ENCODE measurements at regions of chr6 and their contacts with region 1.

Region 1: DNA sequence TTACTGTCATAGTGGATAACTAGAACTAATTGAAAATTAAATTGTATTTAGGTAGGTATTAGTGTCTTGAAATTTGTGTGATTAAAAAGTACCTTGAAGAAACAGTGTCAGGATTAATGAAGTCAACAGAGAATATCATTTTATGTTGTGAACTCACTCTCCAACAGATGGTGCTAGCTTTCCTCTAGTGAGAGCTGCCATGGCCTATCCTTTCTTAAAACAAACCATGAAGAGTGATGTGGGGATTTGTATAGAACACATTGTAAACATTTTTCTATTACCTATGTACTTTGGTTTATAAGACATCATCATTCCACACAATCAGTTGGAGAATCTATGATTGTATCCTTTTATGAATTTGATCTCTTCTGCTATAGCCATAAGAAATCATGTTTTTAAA is 4.8 kb upstream of the SRSF12 start:
- DNase-seq: peak; percentile 21
- ATAC-seq: peak; percentile 90
- H3K4me3 ChIP-seq: no peak overlapping the region
- H3K27ac ChIP-seq: no peak overlapping the region
- H3K4me1 ChIP-seq: peaks cover 0 to 8% of the 10 kb centered on the region in 2 experiments; a peak in 2 of 4 replicates
- H3K27me3 ChIP-seq: no peaks in the 10 kb centered on the region
- CTCF ChIP-seq: peak; percentile 38 to 61 (median 55); a peak in 4 of 6 replicates
- POLR2A ChIP-seq: no peak
- RAD21 ChIP-seq: peak; percentile 82

Region 2: GRCh38 chr6:87848574-87848973 is 1274.1 kb before region 1 on chr6:
- CTCF ChIA-PET with region 1: no interaction called
- POLR2A ChIA-PET with region 1: no interaction called
- RAD21 ChIA-PET with region 1: no interaction called
- intact Hi-C with region 1: no loop called
- DNase-seq: no peak
- ATAC-seq: no peak
- H3K4me3 ChIP-seq: no peak overlapping the region
- H3K27ac ChIP-seq: no peak overlapping the region
- H3K4me1 ChIP-seq: no peaks in the 10 kb centered on the region
- H3K27me3 ChIP-seq: no peaks in the 10 kb centered on the region
- CTCF ChIP-seq: no peak
- POLR2A ChIP-seq: no peak
- RAD21 ChIP-seq: no peak

Region 3: GRCh38 chr6:89242574-89243330 is 120.1 kb after region 1 on chr6:
- CTCF ChIA-PET with region 1: interaction called, 19 read pairs
- POLR2A ChIA-PET with region 1: no interaction called
- RAD21 ChIA-PET with region 1: interaction called in 1 of 2 experiments, 4 read pairs
- intact Hi-C with region 1: loop called (anchors 1 kb)
- DNase-seq: peak; percentile 59
- ATAC-seq: peak; percentile 86
- H3K4me3 ChIP-seq: no peak overlapping the region
- H3K27ac ChIP-seq: no peak overlapping the region
- H3K4me1 ChIP-seq: no peaks in the 10 kb centered on the region
- H3K27me3 ChIP-seq: no peaks in the 10 kb centered on the region
- CTCF ChIP-seq: peak; percentile 46 to 74 (median 52); a peak in 5 of 6 replicates
- POLR2A ChIP-seq: no peak
- RAD21 ChIP-seq: peak; percentile 86

Region 4: DNA sequence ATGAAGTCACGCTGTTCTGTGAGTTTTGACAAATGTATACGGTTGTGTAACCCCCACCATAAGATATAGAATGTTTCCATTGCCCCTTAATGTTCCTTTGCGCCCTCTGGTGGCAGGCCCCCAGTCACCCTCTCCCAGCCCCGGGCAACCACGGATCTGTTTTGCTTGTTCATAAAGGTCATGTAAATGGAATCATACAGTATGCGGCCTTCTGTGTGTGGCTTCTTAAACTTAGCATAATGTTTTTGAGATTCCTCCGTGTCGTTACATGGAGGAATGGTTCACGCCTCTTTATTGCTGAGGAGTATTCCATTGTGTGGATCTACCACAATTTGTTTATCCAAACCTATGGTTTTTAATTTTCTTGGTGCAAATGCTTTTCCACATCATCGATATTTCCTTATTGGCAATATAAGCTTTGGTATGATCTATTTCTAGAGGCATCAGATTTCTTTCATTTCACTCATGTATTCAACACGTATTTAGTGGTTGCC is 487.6 kb after region 1 on chr6:
- CTCF ChIA-PET with region 1: no interaction called
- POLR2A ChIA-PET with region 1: no interaction called
- RAD21 ChIA-PET with region 1: no interaction called
- intact Hi-C with region 1: loop called (anchors 10 kb)
- DNase-seq: peak; percentile 19
- ATAC-seq: peak; percentile 89
- H3K4me3 ChIP-seq: no peak overlapping the region
- H3K27ac ChIP-seq: no peak overlapping the region
- H3K4me1 ChIP-seq: no peaks in the 10 kb centered on the region
- H3K27me3 ChIP-seq: no peaks in the 10 kb centered on the region
- CTCF ChIP-seq: peak; percentile 64 to 95 (median 89); a peak in 5 of 6 replicates
- POLR2A ChIP-seq: no peak
- RAD21 ChIP-seq: peak; percentile 63